IMR-90 (cell line): ENCODE measurements at regions of chr3 and their contacts with region 1.

Region 1: DNA sequence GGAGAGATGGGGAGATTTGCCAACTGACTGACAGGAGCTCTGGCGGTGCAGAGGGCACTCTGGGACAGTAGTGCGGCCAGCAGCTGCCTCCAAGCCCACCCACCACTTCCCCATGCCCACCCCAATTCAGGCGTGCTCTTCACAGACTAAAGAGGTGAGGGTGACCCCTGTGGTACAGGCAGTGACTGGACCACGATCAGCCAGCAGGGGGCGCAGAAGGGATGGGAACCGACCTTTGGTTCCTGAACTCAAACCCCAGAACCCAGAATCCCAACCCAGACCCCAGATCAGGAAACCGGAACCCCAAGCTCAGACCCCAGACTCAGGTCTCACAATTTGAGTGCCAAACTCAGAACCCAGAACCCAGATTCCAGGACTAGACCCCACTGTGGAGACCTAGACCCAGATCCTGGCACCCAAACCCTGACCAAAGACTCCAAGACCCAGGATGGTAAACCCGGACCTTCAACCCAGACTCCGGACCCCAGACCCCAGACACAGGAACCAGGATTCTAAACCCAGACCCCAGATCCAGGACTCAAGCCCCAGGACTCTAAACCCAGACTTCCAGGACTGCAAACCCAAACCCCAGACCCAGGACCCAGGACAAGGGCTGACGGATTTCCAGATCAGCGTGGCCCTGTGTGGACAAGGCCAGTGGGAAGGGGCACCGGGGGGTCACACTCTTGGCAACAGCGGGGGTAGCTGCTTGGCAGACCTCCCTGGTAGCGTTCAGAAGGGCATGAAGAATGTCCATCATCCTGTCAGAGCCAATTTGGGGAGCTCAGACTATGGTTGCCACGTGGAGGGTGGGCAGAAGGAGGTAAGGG is 3.7 kb upstream of the MYL3 start:
- DNase-seq: peak; percentile 21
- ATAC-seq: peak; percentile 68
- H3K4me3 ChIP-seq: no peak overlapping the region
- H3K27ac ChIP-seq: no peak overlapping the region
- H3K4me1 ChIP-seq: no peaks in the 10 kb centered on the region; the same call in 1 of the 2 replicates
- H3K27me3 ChIP-seq: peaks cover 48% of the 10 kb centered on the region
- CTCF ChIP-seq: peak; percentile 78
- POLR2A ChIP-seq: no peak
- RAD21 ChIP-seq: peak; percentile 69

Region 2: DNA sequence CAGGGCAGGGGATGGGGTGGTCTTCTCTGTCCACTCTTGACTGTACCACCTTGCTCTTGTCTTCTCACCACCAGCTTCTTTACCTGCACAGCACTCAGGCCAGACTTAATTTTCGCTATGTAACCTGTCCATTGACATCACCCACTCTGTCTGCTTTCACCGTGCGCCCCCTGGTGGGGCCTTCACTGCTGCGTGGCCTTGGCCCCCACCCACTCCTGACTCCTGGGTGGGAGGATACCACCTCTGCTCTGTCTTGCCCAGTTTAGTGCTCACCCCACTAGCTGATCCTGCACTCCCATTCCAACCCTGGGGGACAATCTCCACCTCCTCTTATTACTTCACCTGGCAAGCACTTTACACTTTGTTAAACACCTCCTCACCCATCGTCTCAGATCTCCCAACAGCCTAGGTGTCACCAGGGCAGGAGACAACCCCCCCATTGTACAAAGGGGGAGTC is 28.3 kb after region 1 on chr3:
- CTCF ChIA-PET with region 1: no interaction called
- POLR2A ChIA-PET with region 1: no interaction called
- dilution Hi-C with region 1: no loop called
- in situ Hi-C with region 1: no loop called
- intact Hi-C with region 1: loop called (anchors 1 kb)
- DNase-seq: peak; percentile 34
- ATAC-seq: peak; percentile 52
- H3K4me3 ChIP-seq: no peak overlapping the region
- H3K27ac ChIP-seq: no peak overlapping the region
- H3K4me1 ChIP-seq: no peaks in the 10 kb centered on the region; the same call in 1 of the 2 replicates
- H3K27me3 ChIP-seq: peaks cover 29% of the 10 kb centered on the region
- CTCF ChIP-seq: peak; percentile 81
- POLR2A ChIP-seq: no peak
- RAD21 ChIP-seq: peak; percentile 80

Region 3: GRCh38 chr3:46909535-46910442 is 42.9 kb after region 1 on chr3:
- CTCF ChIA-PET with region 1: no interaction called
- POLR2A ChIA-PET with region 1: no interaction called
- dilution Hi-C with region 1: no loop called
- in situ Hi-C with region 1: no loop called
- intact Hi-C with region 1: loop called (anchors 1 kb)
- DNase-seq: peak; percentile 85
- ATAC-seq: peak; percentile 92
- H3K4me3 ChIP-seq: no peak overlapping the region
- H3K27ac ChIP-seq: no peak overlapping the region
- H3K4me1 ChIP-seq: peaks cover 9% of the 10 kb centered on the region; the same call in 1 of the 2 replicates
- H3K27me3 ChIP-seq: peaks cover 2% of the 10 kb centered on the region; the same call in 1 of the 2 replicates
- CTCF ChIP-seq: peak; percentile 98
- POLR2A ChIP-seq: peak; percentile 51; the same call in 1 of the 2 replicates
- RAD21 ChIP-seq: peak; percentile 90

Region 4: DNA sequence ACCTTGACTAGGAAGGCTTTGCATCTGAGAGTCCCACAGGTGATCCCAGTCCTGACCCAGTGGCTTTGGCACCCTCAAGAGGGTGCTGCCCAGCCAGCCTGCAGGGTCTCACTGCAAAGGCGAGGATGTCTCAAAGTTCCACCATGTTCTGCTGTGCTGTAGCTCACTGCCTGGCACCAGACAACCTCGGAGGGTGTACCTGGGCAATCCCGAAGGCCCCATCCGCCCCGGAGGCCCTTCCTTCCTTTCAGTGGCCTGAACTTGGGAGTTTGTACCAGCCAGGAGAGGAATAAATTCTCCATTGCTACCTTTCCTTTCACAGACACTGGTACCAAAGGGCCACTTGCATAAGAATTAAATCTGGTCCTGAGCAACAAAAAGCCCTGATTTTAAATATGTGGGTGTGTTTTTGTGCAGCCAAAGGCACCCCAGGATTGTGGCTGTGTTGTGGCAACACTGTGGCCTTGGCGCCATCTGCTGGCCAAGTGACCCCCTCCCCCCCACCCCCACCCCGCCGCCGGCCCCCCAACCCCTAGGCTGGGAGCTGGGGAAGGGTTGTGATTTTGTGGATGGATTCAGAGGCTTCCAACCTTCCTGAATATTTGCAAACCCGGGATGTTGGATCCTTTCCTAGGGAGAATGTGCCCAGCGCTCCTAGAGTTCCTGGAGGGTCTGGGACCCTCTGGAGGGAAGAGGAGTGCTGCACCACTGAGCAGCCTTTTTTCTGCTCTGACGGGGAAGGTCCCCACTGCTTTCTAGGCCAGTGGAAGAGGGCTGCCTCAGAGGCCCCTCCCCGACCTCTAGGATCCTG is 504.2 kb after region 1 on chr3:
- CTCF ChIA-PET with region 1: no interaction called
- POLR2A ChIA-PET with region 1: no interaction called
- dilution Hi-C with region 1: no loop called
- in situ Hi-C with region 1: no loop called
- intact Hi-C with region 1: loop called (anchors 5 kb)
- DNase-seq: no peak
- ATAC-seq: peak; percentile 70
- H3K4me3 ChIP-seq: no peak overlapping the region
- H3K27ac ChIP-seq: no peak overlapping the region
- H3K4me1 ChIP-seq: no peaks in the 10 kb centered on the region
- H3K27me3 ChIP-seq: no peaks in the 10 kb centered on the region; the same call in none of the 2 replicates
- CTCF ChIP-seq: peak; percentile 37
- POLR2A ChIP-seq: no peak
- RAD21 ChIP-seq: peak; percentile 49